ENCODE measurements at regions of chr1 and their contacts with region 1.

Region 1: GRCh38 chr1:44652445-44653106 is 21.7 kb downstream of the TMEM53 start:
- DNase-seq: peak; percentile 63
- H3K4me3 ChIP-seq: no peak overlapping the region
- H3K27ac ChIP-seq: no peak overlapping the region
- H3K4me1 ChIP-seq: peaks cover 11% of the 10 kb centered on the region
- H3K27me3 ChIP-seq: no peaks in the 10 kb centered on the region
- CTCF ChIP-seq: peak; percentile 86 to 94 (median 92)
- POLR2A ChIP-seq: no peak

Region 2: DNA sequence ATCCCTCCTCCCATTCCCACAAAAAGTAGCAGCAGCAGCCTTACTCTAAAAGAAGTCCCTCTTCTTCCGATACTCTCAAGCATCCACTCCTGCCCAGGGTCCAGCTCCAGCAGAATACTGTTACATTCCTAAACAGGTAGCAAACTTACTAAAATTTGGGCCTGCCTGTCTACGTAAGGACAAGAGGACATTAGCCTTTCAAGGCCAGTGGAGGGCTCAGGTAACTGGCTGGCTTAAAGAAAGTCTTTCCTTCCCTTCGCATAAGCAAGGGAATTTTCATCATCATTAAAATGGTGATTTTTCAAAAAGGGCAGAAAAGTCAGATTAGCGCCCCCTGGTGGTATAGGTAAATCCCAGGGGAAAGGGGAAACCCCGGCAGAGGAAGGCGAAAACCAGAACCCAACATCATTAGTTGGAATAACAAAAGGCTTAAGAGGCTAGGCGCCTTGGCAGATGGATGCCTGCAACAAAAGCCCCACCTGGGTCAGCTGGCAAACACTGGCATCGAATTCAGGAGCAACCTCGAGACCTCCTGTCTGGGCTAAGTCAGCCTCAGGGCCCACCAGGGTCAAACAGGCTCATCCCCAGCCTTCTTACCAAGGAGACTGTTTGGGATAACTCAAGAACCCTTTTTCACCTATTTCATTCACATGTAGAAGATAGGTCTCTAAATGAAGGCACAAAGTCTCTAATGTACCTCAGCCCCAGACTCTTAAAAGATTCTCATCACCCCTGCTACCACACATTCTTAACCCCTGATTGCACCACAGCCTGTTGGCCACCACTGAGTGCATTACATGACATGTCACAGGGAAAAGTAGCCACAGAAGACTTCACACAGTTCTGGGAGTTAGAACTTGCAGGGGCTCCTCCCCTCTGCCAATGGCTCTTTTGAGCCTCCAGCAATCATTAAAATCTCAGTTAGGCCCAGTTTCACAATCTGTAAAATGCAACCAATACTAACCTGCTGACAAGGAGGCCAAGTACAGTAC is 334.2 kb before region 1 on chr1:
- intact Hi-C with region 1: no loop called
- DNase-seq: no peak
- H3K4me3 ChIP-seq: no peak overlapping the region
- H3K27ac ChIP-seq: no peak overlapping the region
- H3K4me1 ChIP-seq: no peaks in the 10 kb centered on the region
- H3K27me3 ChIP-seq: no peaks in the 10 kb centered on the region
- CTCF ChIP-seq: peak; percentile 40 to 80 (median 60)
- POLR2A ChIP-seq: no peak

Region 3: DNA sequence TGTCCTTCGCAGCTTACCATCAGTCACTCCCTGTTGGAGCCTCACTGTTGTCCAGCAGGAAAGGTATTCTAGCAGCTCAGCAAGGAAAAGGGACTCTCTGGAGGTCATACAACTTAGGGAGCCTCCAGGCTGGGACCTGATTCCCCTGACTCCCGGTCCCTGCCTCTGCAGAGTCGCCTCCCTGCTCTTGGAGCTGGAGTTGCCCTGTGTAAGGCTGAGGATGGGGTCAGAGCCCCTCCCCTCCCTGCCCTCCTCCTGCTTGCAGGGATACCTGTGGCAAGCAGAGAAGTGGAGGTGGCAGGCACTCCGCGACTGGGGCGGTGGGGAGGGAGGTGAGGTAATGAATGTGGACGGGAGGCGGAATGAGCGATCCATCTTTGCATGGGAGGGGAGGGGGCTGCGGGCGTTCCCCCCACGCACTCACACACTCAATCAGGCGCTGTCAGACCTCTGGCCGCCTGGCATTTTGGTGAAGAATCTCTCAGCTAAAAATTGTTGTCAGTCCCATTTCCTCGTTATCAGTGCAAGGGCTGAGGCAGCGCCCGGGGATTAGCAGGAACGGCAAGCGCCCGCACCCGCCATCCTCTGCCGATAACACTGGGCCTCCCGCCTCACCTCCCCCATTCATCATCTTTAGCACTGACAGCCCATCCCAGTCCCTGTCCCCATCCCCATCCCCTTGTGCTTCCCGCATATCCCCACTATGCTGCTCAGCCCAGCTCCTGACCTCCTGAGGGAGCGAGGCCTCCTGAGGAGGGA is 42.6 kb before region 1 on chr1:
- intact Hi-C with region 1: loop called (anchors 2 kb)
- DNase-seq: no peak
- H3K4me3 ChIP-seq: no peak overlapping the region
- H3K27ac ChIP-seq: no peak overlapping the region
- H3K4me1 ChIP-seq: no peaks in the 10 kb centered on the region
- H3K27me3 ChIP-seq: no peaks in the 10 kb centered on the region
- CTCF ChIP-seq: no peak
- POLR2A ChIP-seq: no peak